ENCODE measurements at regions of chr3 and their contacts with region 1.

Region 1: DNA sequence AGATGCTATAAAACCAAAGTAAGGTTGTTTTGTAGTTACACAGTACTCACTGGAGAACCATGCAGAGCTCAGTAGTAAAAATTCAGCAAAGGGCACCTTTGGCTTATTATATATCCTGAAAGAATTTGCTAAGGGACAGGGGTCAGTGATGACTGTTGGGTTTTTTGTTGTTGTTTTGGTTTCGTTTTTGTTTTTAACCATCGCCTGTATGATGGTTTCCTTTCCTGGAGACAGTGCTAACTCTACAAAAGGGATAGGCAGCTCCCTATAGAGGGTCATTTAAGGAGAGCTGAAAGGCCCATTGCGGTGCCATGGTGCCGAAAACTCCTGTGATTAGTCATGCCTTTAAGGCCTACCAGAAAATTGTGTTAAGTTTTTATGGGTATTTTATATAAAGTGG is 118.2 kb upstream of the GOLIM4 start:
- DNase-seq: no peak
- ATAC-seq: no peak
- H3K4me3 ChIP-seq: no peak overlapping the region
- H3K27ac ChIP-seq: no peak overlapping the region
- H3K4me1 ChIP-seq: no peaks in the 10 kb centered on the region
- H3K27me3 ChIP-seq: no peaks in the 10 kb centered on the region
- CTCF ChIP-seq: no peak
- POLR2A ChIP-seq: no peak
- RAD21 ChIP-seq: no peak

Region 2: GRCh38 chr3:168100777-168101492 is 113.0 kb before region 1 on chr3:
- CTCF ChIA-PET with region 1: no interaction called
- POLR2A ChIA-PET with region 1: no interaction called
- dilution Hi-C with region 1: no loop called
- in situ Hi-C with region 1: no loop called
- intact Hi-C with region 1: no loop called
- DNase-seq: peak; percentile 56
- ATAC-seq: peak; percentile 36
- H3K4me3 ChIP-seq: no peak overlapping the region
- H3K27ac ChIP-seq: no peak overlapping the region
- H3K4me1 ChIP-seq: no peaks in the 10 kb centered on the region
- H3K27me3 ChIP-seq: no peaks in the 10 kb centered on the region
- CTCF ChIP-seq: no peak
- POLR2A ChIP-seq: no peak
- RAD21 ChIP-seq: no peak

Region 3: DNA sequence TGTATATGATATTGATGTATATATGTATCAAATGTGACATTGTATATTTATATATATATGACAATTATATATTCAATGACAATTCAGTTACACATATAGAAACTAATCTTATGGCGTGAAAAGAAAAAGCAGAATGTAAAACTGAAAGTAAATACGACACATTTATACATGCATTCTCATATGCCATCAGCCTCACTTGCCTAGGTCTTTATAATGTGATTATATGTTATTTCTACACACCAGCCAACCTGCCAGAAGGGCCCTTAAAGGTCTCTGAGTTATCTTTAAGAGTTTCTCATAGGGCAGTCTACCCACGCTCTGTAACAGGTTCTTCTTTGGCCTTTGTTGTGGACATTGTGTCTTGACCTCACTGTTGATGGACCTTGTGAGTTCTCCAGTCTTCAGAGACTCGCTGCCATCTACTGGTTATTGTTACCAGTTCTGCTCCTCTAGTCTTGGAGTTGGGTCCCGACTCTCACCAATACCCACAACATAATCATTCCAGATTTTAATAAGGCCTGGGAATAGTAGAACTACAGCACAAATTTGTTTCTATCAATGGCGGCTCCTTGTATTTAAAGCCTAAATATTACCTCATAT is 253.3 kb after region 1 on chr3:
- CTCF ChIA-PET with region 1: interaction called, 9 read pairs
- POLR2A ChIA-PET with region 1: no interaction called
- dilution Hi-C with region 1: no loop called
- in situ Hi-C with region 1: loop called (anchors 10 kb)
- intact Hi-C with region 1: loop called (anchors 1 kb)
- DNase-seq: peak; percentile 55
- ATAC-seq: peak; percentile 90
- H3K4me3 ChIP-seq: no peak overlapping the region
- H3K27ac ChIP-seq: no peak overlapping the region
- H3K4me1 ChIP-seq: no peaks in the 10 kb centered on the region
- H3K27me3 ChIP-seq: no peaks in the 10 kb centered on the region
- CTCF ChIP-seq: peak; percentile 60
- POLR2A ChIP-seq: no peak
- RAD21 ChIP-seq: peak; percentile 73

Region 4: DNA sequence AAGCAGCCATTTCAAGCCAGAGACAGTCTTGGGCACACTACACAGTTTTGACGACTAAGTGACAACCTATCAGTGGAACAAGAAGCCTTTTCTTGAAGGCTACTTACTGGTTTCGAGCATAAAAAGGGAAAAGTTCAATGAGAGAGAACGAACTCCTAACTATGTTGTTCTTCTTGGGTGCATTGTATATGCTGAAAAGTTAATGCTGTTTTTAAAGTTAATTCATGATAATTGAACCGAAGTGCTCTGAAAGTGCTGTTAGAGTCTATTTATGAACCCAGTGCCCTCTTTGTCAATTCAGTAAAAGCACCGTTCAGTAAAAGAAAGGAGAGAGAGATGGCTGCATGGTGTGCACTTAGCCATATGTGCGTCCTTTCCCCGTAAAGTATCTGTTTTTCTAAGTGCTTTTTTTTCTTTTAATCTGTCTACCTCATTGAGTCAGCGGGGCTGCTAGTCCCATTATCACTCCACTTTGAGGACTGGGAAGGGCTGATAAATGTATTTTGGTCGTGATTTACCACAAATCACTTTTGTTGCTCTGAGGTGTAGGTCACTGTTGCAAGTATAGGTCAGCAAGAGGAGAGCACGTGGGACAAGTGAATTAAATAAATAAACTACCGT is 262.6 kb after region 1 on chr3:
- CTCF ChIA-PET with region 1: no interaction called
- POLR2A ChIA-PET with region 1: no interaction called
- dilution Hi-C with region 1: no loop called
- in situ Hi-C with region 1: loop called (anchors 10 kb)
- intact Hi-C with region 1: no loop called
- DNase-seq: no peak
- ATAC-seq: no peak
- H3K4me3 ChIP-seq: no peak overlapping the region
- H3K27ac ChIP-seq: no peak overlapping the region
- H3K4me1 ChIP-seq: no peaks in the 10 kb centered on the region
- H3K27me3 ChIP-seq: no peaks in the 10 kb centered on the region
- CTCF ChIP-seq: no peak
- POLR2A ChIP-seq: no peak
- RAD21 ChIP-seq: no peak

Region 5: GRCh38 chr3:168511428-168512014 is 297.6 kb after region 1 on chr3:
- CTCF ChIA-PET with region 1: no interaction called
- POLR2A ChIA-PET with region 1: no interaction called
- dilution Hi-C with region 1: no loop called
- in situ Hi-C with region 1: no loop called
- intact Hi-C with region 1: loop called (anchors 2 kb)
- DNase-seq: peak; percentile 20
- ATAC-seq: peak; percentile 40; the same call in 1 of the 2 replicates
- H3K4me3 ChIP-seq: no peak overlapping the region
- H3K27ac ChIP-seq: no peak overlapping the region
- H3K4me1 ChIP-seq: no peaks in the 10 kb centered on the region
- H3K27me3 ChIP-seq: no peaks in the 10 kb centered on the region
- CTCF ChIP-seq: peak; percentile 66
- POLR2A ChIP-seq: no peak
- RAD21 ChIP-seq: peak; percentile 57

Region 6: DNA sequence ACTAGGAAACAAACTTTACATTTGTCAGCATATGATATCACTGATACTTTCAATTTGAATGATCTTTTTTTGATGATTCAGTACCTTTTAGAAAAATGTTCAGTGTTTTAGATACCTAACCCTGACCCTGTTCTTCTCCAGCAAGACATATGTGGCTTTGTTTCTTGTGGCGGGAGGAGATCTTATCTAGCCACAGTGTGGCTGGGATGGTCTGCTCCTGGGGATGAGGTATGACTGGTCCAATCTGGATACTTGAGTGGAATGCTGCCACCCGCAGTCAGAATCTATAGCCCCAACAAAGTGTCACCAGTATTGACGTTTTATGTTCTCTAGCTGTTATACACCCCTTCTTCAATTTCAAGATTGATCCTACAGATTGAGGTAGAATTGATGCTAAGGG is 320.8 kb after region 1 on chr3:
- CTCF ChIA-PET with region 1: no interaction called
- POLR2A ChIA-PET with region 1: no interaction called
- dilution Hi-C with region 1: no loop called
- in situ Hi-C with region 1: no loop called
- intact Hi-C with region 1: no loop called
- DNase-seq: no peak
- ATAC-seq: no peak
- H3K4me3 ChIP-seq: no peak overlapping the region
- H3K27ac ChIP-seq: no peak overlapping the region
- H3K4me1 ChIP-seq: no peaks in the 10 kb centered on the region
- H3K27me3 ChIP-seq: no peaks in the 10 kb centered on the region
- CTCF ChIP-seq: no peak
- POLR2A ChIP-seq: no peak
- RAD21 ChIP-seq: no peak

Region 7: GRCh38 chr3:168620826-168621225 is 406.9 kb after region 1 on chr3:
- CTCF ChIA-PET with region 1: no interaction called
- POLR2A ChIA-PET with region 1: no interaction called
- dilution Hi-C with region 1: no loop called
- in situ Hi-C with region 1: no loop called
- intact Hi-C with region 1: loop called (anchors 1 kb)
- DNase-seq: no peak
- ATAC-seq: peak; percentile 72; the same call in 1 of the 2 replicates
- H3K4me3 ChIP-seq: no peak overlapping the region
- H3K27ac ChIP-seq: no peak overlapping the region
- H3K4me1 ChIP-seq: no peaks in the 10 kb centered on the region
- H3K27me3 ChIP-seq: no peaks in the 10 kb centered on the region
- CTCF ChIP-seq: peak; percentile 43
- POLR2A ChIP-seq: no peak
- RAD21 ChIP-seq: peak; percentile 41; the same call in 1 of the 2 replicates

Measured in IMR-90 (cell line).